ENCODE measurements at regions of chr1 and their contacts with region 1.

Region 1: GRCh38 chr1:222589462-222590302 is at the start of gene TAF1A:
- DNase-seq: peak; percentile 83 to 85
- H3K4me3 ChIP-seq: peak within 1 kb of the TSS; percentile 85
- H3K27ac ChIP-seq: peak within 1 kb of the TSS; percentile 77
- H3K4me1 ChIP-seq: peaks cover 36% of the 10 kb centered on the region; the same call in 1 of the 2 replicates
- H3K27me3 ChIP-seq: no peaks in the 10 kb centered on the region
- CTCF ChIP-seq: no peak
- total RNA-seq, gene TAF1A: 18.4 and 19.3 TPM in 2 replicates

Region 2: GRCh38 chr1:222543817-222544216 is 45.9 kb before region 1 on chr1:
- CTCF ChIA-PET with region 1: interaction called, 10 read pairs
- POLR2A ChIA-PET with region 1: no interaction called
- intact Hi-C with region 1: no loop called
- DNase-seq: no peak
- H3K4me3 ChIP-seq: no peak overlapping the region
- H3K27ac ChIP-seq: no peak overlapping the region
- H3K4me1 ChIP-seq: peaks cover 26% of the 10 kb centered on the region
- H3K27me3 ChIP-seq: no peaks in the 10 kb centered on the region
- CTCF ChIP-seq: no peak

Region 3: GRCh38 chr1:222617367-222617951 is 27.8 kb after region 1 on chr1:
- CTCF ChIA-PET with region 1: no interaction called
- POLR2A ChIA-PET with region 1: interaction called, 6 read pairs
- intact Hi-C with region 1: loop called (anchors 2 kb)
- DNase-seq: peak; percentile 88 to 90
- H3K4me3 ChIP-seq: peak overlapping the region; percentile 43; the same call in 1 of the 2 replicates
- H3K27ac ChIP-seq: 0 out of 2 replicates have a peak overlapping the region, but pooled peaks have one; percentile 14
- H3K4me1 ChIP-seq: peaks cover 6% of the 10 kb centered on the region
- H3K27me3 ChIP-seq: no peaks in the 10 kb centered on the region
- CTCF ChIP-seq: no peak